Mammary epithelial cell (primary cell): ENCODE measurements at regions of chr14 and their contacts with region 1.

Region 1: GRCh38 chr14:66624299-66624937 is 116.5 kb downstream of the GPHN start:
- DNase-seq: peak; percentile 34
- H3K4me3 ChIP-seq: no peak overlapping the region
- H3K27ac ChIP-seq: no peak overlapping the region
- H3K4me1 ChIP-seq: peaks cover 5% of the 10 kb centered on the region
- H3K27me3 ChIP-seq: no peaks in the 10 kb centered on the region
- CTCF ChIP-seq: peak; percentile 78 to 81

Region 2: DNA sequence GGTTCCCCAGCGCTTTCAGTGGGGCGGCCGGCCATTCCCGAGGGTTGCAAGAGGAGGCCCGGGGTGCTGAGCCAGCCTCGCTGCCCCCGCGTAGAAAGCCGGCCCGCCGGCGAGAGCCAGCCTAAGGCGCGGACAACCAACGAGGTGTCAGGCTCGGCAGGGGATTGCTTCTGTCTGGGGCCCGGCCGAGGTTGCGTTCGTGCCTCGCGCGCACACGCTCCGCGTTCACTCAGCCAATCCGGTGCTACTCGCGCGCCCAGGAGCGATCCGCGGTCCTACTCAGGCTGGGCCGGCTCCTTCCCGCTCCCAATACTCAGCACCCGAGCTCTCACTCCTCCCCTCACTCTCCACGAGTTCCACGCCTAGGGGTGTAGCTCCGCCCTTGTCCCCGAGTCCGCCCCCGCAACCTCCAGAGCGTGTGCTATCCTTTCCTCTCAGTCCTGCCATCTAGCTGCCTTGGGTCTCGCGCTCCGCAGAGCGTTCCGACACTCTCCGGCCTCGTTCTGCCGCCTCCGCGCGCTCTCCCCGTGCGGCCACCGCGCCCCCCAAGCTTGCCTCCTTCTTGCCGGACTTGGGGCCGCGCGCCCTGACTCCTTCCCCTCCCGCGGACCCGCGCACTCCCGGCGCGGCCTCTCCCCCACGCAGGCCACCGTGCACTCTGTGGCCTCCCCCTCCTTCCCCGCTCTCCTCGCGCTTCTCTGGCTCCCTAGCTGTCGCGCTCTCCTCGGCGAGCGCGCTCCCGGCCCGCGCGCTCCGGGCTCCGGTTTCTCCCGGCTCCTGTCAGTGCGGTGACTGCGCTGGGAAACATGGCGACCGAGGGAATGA is 116.5 kb before region 1 on chr14 and contains the start of gene GPHN:
- CTCF ChIA-PET with region 1: no interaction called
- dilution Hi-C with region 1: no loop called
- in situ Hi-C with region 1: no loop called
- intact Hi-C with region 1: loop called (anchors 5 kb)
- DNase-seq: peak; percentile 99
- H3K4me3 ChIP-seq: peak within 1 kb of the TSS; percentile 90 to 99 (median 95)
- H3K27ac ChIP-seq: peak within 1 kb of the TSS; percentile 68
- H3K4me1 ChIP-seq: peaks cover 10% of the 10 kb centered on the region
- H3K27me3 ChIP-seq: no peaks in the 10 kb centered on the region
- CTCF ChIP-seq: peak in 1 of 2 donors; percentile 44
- total RNA-seq, gene GPHN: 10.8 to 30.2 TPM

Region 3: DNA sequence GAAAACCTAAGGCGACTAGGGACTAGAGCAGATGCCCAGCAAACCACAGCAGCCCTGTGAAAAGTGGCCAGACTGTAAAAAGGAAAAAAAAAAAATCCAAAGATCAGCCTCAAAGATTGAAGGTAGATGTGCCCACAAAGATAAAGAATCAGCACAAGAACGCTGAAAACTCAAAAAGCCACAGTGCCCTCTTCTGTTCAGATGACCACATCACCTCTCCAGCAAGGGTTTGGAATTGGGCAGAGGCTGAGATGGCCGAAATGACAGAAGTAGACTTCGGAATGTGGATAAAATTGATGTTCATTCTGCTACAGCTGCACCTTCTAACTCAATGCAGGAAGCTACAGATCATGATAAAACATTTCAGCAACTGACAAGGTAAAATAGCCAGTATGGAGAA is 38.0 kb after region 1 on chr14:
- CTCF ChIA-PET with region 1: interaction called, 3 read pairs
- dilution Hi-C with region 1: no loop called
- in situ Hi-C with region 1: no loop called
- intact Hi-C with region 1: loop called (anchors 1 kb)
- DNase-seq: peak; percentile 37
- H3K4me3 ChIP-seq: no peak overlapping the region
- H3K27ac ChIP-seq: no peak overlapping the region
- H3K4me1 ChIP-seq: no peaks in the 10 kb centered on the region
- H3K27me3 ChIP-seq: no peaks in the 10 kb centered on the region
- CTCF ChIP-seq: peak; percentile 56 to 59

Region 4: GRCh38 chr14:66746316-66747006 is 122.0 kb after region 1 on chr14:
- CTCF ChIA-PET with region 1: no interaction called
- dilution Hi-C with region 1: no loop called
- in situ Hi-C with region 1: no loop called
- intact Hi-C with region 1: loop called (anchors 1 kb)
- DNase-seq: peak; percentile 28
- H3K4me3 ChIP-seq: no peak overlapping the region
- H3K27ac ChIP-seq: no peak overlapping the region
- H3K4me1 ChIP-seq: no peaks in the 10 kb centered on the region
- H3K27me3 ChIP-seq: no peaks in the 10 kb centered on the region
- CTCF ChIP-seq: peak; percentile 65 to 75

Region 5: GRCh38 chr14:67111022-67111421 is 486.6 kb after region 1 on chr14:
- CTCF ChIA-PET with region 1: no interaction called
- dilution Hi-C with region 1: no loop called
- in situ Hi-C with region 1: loop called (anchors 25 kb)
- intact Hi-C with region 1: no loop called
- DNase-seq: no peak
- H3K4me3 ChIP-seq: no peak overlapping the region
- H3K27ac ChIP-seq: no peak overlapping the region
- H3K4me1 ChIP-seq: no peaks in the 10 kb centered on the region
- H3K27me3 ChIP-seq: no peaks in the 10 kb centered on the region
- CTCF ChIP-seq: no peak

Region 6: GRCh38 chr14:67137744-67138371 is 513.4 kb after region 1 on chr14:
- CTCF ChIA-PET with region 1: no interaction called
- dilution Hi-C with region 1: no loop called
- in situ Hi-C with region 1: no loop called
- intact Hi-C with region 1: loop called (anchors 2 kb)
- DNase-seq: peak; percentile 6
- H3K4me3 ChIP-seq: no peak overlapping the region
- H3K27ac ChIP-seq: no peak overlapping the region
- H3K4me1 ChIP-seq: no peaks in the 10 kb centered on the region
- H3K27me3 ChIP-seq: no peaks in the 10 kb centered on the region
- CTCF ChIP-seq: peak; percentile 47 to 52

Region 7: DNA sequence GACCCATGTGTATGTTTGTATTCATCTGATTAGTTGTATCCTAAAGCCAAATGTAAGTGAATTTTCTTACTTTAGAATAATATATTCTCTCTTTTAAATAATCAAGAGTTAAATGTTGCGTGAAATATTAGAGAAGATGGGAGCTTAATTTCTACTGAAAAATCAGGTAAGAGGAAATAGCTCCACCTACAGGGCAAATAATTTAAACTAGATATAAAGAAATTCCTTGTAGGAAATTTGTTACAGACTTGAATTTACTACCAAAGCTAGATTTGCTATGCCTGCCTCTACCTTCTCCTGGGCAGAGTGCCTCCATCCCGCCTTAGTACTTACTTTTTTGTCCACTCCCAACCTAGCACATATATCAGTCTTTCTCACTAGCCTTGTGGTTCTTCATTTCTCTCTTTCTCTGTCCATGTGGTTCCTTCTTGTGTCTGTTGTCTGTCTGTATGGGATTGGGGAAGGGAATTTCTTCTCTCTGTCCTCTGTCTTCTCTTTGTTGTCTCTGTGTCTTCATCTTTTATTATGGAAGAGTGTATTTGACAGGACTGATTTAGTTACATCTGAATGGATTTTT is 661.5 kb after region 1 on chr14:
- CTCF ChIA-PET with region 1: interaction called, 11 read pairs
- dilution Hi-C with region 1: no loop called
- in situ Hi-C with region 1: no loop called
- intact Hi-C with region 1: loop called (anchors 5 kb)
- DNase-seq: peak; percentile 11
- H3K4me3 ChIP-seq: no peak overlapping the region
- H3K27ac ChIP-seq: no peak overlapping the region
- H3K4me1 ChIP-seq: no peaks in the 10 kb centered on the region
- H3K27me3 ChIP-seq: no peaks in the 10 kb centered on the region
- CTCF ChIP-seq: peak; percentile 38 to 53